OCI-LY7 (cell line): ENCODE measurements at regions of chr11 and their contacts with region 1.

Region 1: DNA sequence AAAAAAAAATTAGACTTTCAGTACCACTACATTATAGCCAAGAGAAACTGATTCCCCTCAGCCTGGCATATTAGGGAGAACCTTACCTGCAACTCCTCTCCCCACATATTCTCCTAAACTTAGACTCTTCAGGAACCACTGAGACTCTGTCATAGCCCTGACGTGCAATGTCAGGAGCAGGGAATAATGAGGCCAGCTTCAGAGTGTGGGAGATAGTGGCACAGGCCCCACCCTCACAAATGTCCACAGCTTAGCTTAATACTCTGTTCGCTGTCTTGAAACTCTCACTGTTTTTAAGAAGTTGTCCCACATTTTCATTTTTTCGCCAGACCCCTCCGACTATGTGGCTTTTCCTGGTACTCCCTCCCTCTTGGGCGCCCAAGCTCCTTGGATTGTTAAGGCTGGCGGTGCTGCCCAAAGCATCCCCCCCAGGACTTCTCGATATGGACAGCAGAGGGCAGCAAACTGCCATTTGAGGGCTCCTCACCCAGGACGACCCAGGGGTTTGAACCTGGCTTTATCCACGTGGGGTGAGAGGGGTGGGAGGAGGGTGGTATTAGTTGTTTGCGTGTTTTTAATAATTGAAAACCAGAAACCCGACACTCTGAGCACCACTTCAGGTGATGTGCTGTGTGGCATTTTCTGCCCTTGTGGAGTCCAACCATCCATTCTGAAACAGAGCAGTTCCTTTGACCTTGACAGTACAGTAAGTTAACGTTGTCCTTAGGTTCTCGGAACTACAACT is 45.2 kb upstream of the RASSF10 start:
- DNase-seq: peak; percentile 57
- H3K4me3 ChIP-seq: no peak overlapping the region
- H3K27ac ChIP-seq: no peak overlapping the region
- H3K4me1 ChIP-seq: peaks cover 6% of the 10 kb centered on the region
- CTCF ChIP-seq: peak; percentile 90

Region 2: GRCh38 chr11:13238879-13239514 is 275.0 kb after region 1 on chr11:
- CTCF ChIA-PET with region 1: no interaction called
- POLR2A ChIA-PET with region 1: no interaction called
- intact Hi-C with region 1: loop called (anchors 1 kb)
- DNase-seq: peak; percentile 54
- H3K4me3 ChIP-seq: no peak overlapping the region
- H3K27ac ChIP-seq: no peak overlapping the region
- H3K4me1 ChIP-seq: no peaks in the 10 kb centered on the region
- CTCF ChIP-seq: peak; percentile 94

Region 3: GRCh38 chr11:13343931-13344717 is 380.2 kb after region 1 on chr11:
- CTCF ChIA-PET with region 1: no interaction called
- POLR2A ChIA-PET with region 1: no interaction called
- intact Hi-C with region 1: loop called (anchors 1 kb)
- DNase-seq: peak; percentile 63
- H3K4me3 ChIP-seq: no peak overlapping the region
- H3K27ac ChIP-seq: no peak overlapping the region
- H3K4me1 ChIP-seq: no peaks in the 10 kb centered on the region
- CTCF ChIP-seq: peak; percentile 90